ENCODE measurements at regions of chr6 and their contacts with region 1.

Region 1: GRCh38 chr6:112087136-112087911 is at the starts of genes FAM229B and TUBE1:
- DNase-seq: peak; percentile 95
- H3K4me3 Mint-ChIP-seq: no peak within 1 kb of the TSS
- H3K27ac Mint-ChIP-seq: no peak within 1 kb of the TSS
- H3K4me1 Mint-ChIP-seq: peaks cover 7% of the 10 kb centered on the region
- H3K27me3 Mint-ChIP-seq: no peaks in the 10 kb centered on the region
- total RNA-seq, gene FAM229B: 9.5 to 10.2 TPM
- total RNA-seq, gene TUBE1: 53.7 to 62.7 TPM

Region 2: GRCh38 chr6:110366256-110366655 is 1721.1 kb before region 1 on chr6:
- CTCF ChIA-PET with region 1: no interaction called
- intact Hi-C with region 1: no loop called
- DNase-seq: peak; percentile 17
- H3K4me3 Mint-ChIP-seq: no peak overlapping the region
- H3K27ac Mint-ChIP-seq: no peak overlapping the region
- H3K4me1 Mint-ChIP-seq: peaks cover 20% of the 10 kb centered on the region
- H3K27me3 Mint-ChIP-seq: peaks cover 4% of the 10 kb centered on the region

Region 3: GRCh38 chr6:111087106-111087835 is 1000.1 kb before region 1 on chr6 and contains the start of gene SLC16A10:
- CTCF ChIA-PET with region 1: no interaction called
- intact Hi-C with region 1: loop called (anchors 5 kb)
- DNase-seq: peak; percentile 74
- H3K4me3 Mint-ChIP-seq: peak within 1 kb of the TSS; percentile 89
- H3K27ac Mint-ChIP-seq: peak within 1 kb of the TSS; percentile 76
- H3K4me1 Mint-ChIP-seq: peaks cover 36% of the 10 kb centered on the region
- H3K27me3 Mint-ChIP-seq: no peaks in the 10 kb centered on the region
- total RNA-seq, gene SLC16A10: 6.6 to 8.1 TPM

Region 4: GRCh38 chr6:111750753-111751684 is 336.3 kb before region 1 on chr6:
- CTCF ChIA-PET with region 1: no interaction called
- intact Hi-C with region 1: loop called (anchors 2 kb)
- DNase-seq: peak; percentile 76
- H3K4me3 Mint-ChIP-seq: peak overlapping the region; percentile 32
- H3K27ac Mint-ChIP-seq: peak overlapping the region; percentile 95
- H3K4me1 Mint-ChIP-seq: peaks cover 92% of the 10 kb centered on the region
- H3K27me3 Mint-ChIP-seq: no peaks in the 10 kb centered on the region

Region 5: DNA sequence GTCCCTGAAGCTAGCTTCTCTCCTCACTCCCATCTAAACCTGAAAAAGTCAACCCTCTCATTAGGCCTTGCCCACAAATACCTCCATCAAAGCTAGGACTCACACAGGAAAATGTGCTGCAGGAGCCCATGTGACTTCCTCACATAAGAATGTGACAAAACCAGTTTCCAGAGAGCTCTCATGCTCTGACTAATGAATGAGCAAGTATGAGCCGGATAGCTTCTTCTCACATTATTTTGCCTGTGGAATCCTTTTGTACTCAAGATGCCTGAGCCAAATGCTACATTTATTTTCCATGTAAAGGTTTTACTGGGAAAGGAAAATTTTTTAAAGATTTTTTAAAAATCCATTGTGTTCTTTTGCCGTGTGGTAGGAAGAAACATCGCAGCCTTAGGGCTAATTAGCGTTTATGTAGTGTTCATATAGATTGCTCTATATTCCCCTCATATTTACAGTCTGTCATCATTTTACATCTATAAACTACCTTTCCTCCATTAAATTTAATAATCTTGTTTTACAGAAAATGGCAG is 102.1 kb before region 1 on chr6:
- CTCF ChIA-PET with region 1: no interaction called
- intact Hi-C with region 1: no loop called
- DNase-seq: peak; percentile 76
- H3K4me3 Mint-ChIP-seq: peak overlapping the region; percentile 9
- H3K27ac Mint-ChIP-seq: peak overlapping the region; percentile 94
- H3K4me1 Mint-ChIP-seq: peaks cover 87% of the 10 kb centered on the region
- H3K27me3 Mint-ChIP-seq: no peaks in the 10 kb centered on the region

Region 6: DNA sequence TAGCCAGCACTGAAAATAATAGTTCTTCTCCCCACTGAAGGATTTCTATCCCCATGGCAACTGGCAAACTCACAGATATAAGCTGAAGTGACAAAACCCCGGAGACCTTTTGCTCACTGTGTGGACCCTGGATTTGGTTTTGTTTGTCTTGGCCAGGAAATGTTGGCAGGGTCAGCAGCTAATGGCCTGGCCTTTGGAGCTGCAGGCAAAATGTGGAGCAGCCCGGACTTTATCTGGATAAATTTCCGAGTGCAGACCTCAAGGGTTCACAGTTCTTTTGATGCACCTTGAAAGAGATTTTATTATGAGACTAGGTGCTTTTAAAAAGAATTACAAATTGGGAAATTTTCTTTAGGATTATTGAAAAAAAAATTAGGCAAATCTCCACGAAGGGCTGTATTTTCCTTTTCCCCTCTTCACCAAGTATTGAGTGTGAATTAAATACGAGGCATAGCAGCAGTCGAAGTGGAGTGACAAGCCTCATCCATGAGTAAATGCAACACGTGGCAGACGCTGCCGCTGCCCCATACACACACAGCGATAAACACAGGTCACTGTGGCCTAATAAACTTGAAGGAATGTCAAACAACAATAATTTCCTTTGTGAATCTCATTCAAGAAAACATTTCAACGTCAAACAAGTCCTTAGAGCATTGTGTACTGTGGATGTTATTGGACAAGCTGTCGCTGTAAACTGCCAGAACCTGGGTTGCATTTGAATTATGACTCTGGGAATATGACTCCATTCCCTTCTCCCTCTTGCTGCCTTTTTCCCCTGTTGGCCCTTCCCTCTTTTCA is 68.5 kb before region 1 on chr6:
- CTCF ChIA-PET with region 1: no interaction called
- intact Hi-C with region 1: loop called (anchors 1 kb)
- DNase-seq: no peak
- H3K4me3 Mint-ChIP-seq: no peak overlapping the region
- H3K27ac Mint-ChIP-seq: no peak overlapping the region
- H3K4me1 Mint-ChIP-seq: peaks cover 67% of the 10 kb centered on the region
- H3K27me3 Mint-ChIP-seq: no peaks in the 10 kb centered on the region

Region 7: GRCh38 chr6:112061605-112062004 is 25.7 kb before region 1 on chr6:
- CTCF ChIA-PET with region 1: no interaction called
- intact Hi-C with region 1: no loop called
- DNase-seq: no peak
- H3K4me3 Mint-ChIP-seq: no peak overlapping the region
- H3K27ac Mint-ChIP-seq: no peak overlapping the region
- H3K4me1 Mint-ChIP-seq: no peaks in the 10 kb centered on the region
- H3K27me3 Mint-ChIP-seq: no peaks in the 10 kb centered on the region

Region 8: GRCh38 chr6:112153926-112154607 is 66.7 kb after region 1 on chr6:
- CTCF ChIA-PET with region 1: interaction called, 12 read pairs
- intact Hi-C with region 1: loop called (anchors 2 kb)
- DNase-seq: no peak
- H3K4me3 Mint-ChIP-seq: no peak overlapping the region
- H3K27ac Mint-ChIP-seq: peak overlapping the region; percentile 48
- H3K4me1 Mint-ChIP-seq: peaks cover 24% of the 10 kb centered on the region
- H3K27me3 Mint-ChIP-seq: no peaks in the 10 kb centered on the region

Region 9: GRCh38 chr6:112311950-112312547 is 224.7 kb after region 1 on chr6:
- CTCF ChIA-PET with region 1: interaction called, 3 read pairs
- intact Hi-C with region 1: loop called (anchors 2 kb)
- DNase-seq: peak; percentile 17
- H3K4me3 Mint-ChIP-seq: no peak overlapping the region
- H3K27ac Mint-ChIP-seq: no peak overlapping the region
- H3K4me1 Mint-ChIP-seq: no peaks in the 10 kb centered on the region
- H3K27me3 Mint-ChIP-seq: no peaks in the 10 kb centered on the region